ENCODE measurements at regions of chr1 and their contacts with region 1.

Region 1: GRCh38 chr1:1324521-1325287 is at the starts of genes CPTP and INTS11:
- DNase-seq: peak; percentile 97
- H3K4me3 Mint-ChIP-seq: peak within 1 kb of the TSS; percentile 92
- H3K27ac Mint-ChIP-seq: peak within 1 kb of the TSS; percentile 84
- H3K4me1 Mint-ChIP-seq: peaks cover 36% of the 10 kb centered on the region
- H3K27me3 Mint-ChIP-seq: no peaks in the 10 kb centered on the region
- total RNA-seq, gene CPTP: 5.6 to 5.7 TPM
- total RNA-seq, gene INTS11: 117 to 118 TPM

Region 2: GRCh38 chr1:1349256-1350012 is 24.7 kb after region 1 on chr1 and contains the start of gene DVL1:
- CTCF ChIA-PET with region 1: no interaction called
- intact Hi-C with region 1: loop called (anchors 2 kb)
- DNase-seq: peak; percentile 79
- H3K4me3 Mint-ChIP-seq: peak within 1 kb of the TSS; percentile 76
- H3K27ac Mint-ChIP-seq: no peak within 1 kb of the TSS
- H3K4me1 Mint-ChIP-seq: peaks cover 28% of the 10 kb centered on the region
- H3K27me3 Mint-ChIP-seq: peaks cover 12% of the 10 kb centered on the region
- total RNA-seq, gene DVL1: 33.4 to 35.0 TPM